ENCODE measurements at regions of chr10 and their contacts with region 1.

Region 1: DNA sequence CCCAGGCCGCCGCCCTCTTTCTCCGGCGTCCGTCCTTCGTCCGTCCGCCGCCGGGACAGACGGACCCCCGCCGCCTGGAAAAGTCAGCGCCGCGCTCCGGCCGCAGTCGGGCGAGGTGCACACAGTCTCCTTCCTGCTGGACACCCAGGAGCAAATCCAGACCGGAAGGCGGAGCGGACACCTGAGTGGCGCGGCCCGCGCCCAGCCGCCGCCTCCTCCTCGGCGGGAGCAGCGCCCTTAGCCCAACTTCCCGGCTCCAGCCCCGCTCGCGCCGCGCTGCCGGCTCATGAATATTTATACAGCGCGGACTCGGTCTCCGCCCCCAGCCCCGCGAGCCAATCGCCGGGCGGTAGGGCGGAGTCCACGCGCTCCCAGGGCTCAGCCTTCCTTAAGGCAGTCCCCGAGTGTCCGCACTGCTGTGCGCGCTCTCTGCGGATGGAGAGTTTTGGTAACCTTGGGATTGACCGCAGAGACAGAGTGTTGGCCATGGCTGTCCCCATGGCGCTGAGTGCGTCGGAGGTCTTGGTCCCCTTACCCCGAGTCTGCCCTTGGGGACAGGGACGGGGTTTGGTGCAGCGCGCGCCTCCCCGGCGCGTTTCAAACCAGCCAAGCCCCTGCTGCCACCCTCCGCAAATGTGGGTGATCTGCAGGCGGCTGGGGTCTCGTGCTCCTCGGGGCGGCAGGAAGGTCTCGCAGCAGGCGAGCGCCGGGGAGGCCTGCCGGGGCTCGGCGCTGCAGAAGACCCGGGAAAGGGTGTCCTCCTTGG is at the start of gene FZD8:
- DNase-seq: peak; percentile 92
- H3K4me3 Mint-ChIP-seq: peak within 1 kb of the TSS; percentile 85
- H3K27ac Mint-ChIP-seq: peak within 1 kb of the TSS; percentile 31
- H3K4me1 Mint-ChIP-seq: peaks cover 6% of the 10 kb centered on the region
- H3K27me3 Mint-ChIP-seq: no peaks in the 10 kb centered on the region
- CTCF ChIP-seq: no peak
- total RNA-seq, gene FZD8: 9.8 and 13.0 TPM in 2 replicates

Region 2: DNA sequence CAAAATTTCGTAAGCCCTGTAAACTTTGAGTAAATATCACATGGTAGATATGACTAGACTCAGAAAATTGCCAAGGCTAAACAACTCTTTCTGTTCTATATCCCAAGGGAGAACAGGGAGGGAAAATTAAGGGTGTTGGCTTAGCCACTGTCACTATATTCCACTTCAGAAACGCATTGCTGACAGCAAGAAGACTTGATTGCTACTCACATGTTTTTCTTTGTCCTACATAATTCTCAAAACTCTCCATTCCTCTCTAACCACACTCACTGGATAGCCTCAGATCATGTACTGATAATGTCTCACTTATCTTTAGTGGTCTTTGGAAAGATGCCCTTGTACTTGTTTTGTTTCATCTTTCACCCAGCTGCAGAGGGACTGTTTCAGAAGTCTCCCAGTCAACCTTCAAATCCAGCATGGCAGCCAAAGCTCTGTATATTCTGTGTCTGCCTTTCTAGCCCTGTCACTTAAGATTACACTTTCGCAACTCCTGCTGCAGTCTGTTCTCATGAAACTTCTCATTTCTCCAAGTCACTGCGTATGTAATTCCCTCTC is 582.3 kb after region 1 on chr10:
- CTCF ChIA-PET with region 1: no interaction called
- POLR2A ChIA-PET with region 1: no interaction called
- intact Hi-C with region 1: loop called (anchors 10 kb)
- DNase-seq: peak; percentile 39
- H3K4me3 Mint-ChIP-seq: no peak overlapping the region
- H3K27ac Mint-ChIP-seq: peak overlapping the region; percentile 25
- H3K4me1 Mint-ChIP-seq: peaks cover 15% of the 10 kb centered on the region
- H3K27me3 Mint-ChIP-seq: no peaks in the 10 kb centered on the region
- CTCF ChIP-seq: no peak

Region 3: DNA sequence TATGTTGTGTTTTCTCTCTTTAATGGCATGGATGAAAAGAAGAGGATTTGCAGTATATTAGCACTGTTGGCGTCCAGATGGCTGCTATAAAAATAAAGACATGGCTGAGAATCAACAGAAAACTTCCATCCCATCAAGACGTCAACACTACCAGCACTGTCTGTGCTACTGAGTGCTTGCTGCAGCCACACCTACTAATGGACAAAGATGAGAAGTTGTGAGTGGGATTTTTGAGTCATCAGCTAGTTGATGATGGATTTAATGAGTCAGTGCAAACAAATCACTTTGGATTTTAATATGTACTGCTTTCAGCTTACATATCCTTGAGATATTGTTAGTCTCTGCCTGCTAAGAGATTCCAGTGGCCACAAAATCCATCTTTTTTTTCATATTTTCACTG is 852.2 kb after region 1 on chr10:
- CTCF ChIA-PET with region 1: no interaction called
- POLR2A ChIA-PET with region 1: interaction called, 5 read pairs
- intact Hi-C with region 1: loop called (anchors 2 kb)
- DNase-seq: peak; percentile 67
- H3K4me3 Mint-ChIP-seq: no peak overlapping the region
- H3K27ac Mint-ChIP-seq: peak overlapping the region; percentile 87
- H3K4me1 Mint-ChIP-seq: peaks cover 44% of the 10 kb centered on the region
- H3K27me3 Mint-ChIP-seq: no peaks in the 10 kb centered on the region
- CTCF ChIP-seq: no peak

Region 4: GRCh38 chr10:36725581-36726520 is 1083.6 kb after region 1 on chr10:
- CTCF ChIA-PET with region 1: interaction called, 9 read pairs
- POLR2A ChIA-PET with region 1: interaction called, 5 read pairs
- intact Hi-C with region 1: loop called (anchors 1 kb)
- DNase-seq: peak; percentile 91
- H3K4me3 Mint-ChIP-seq: no peak overlapping the region
- H3K27ac Mint-ChIP-seq: no peak overlapping the region
- H3K4me1 Mint-ChIP-seq: peaks cover 8% of the 10 kb centered on the region
- H3K27me3 Mint-ChIP-seq: no peaks in the 10 kb centered on the region
- CTCF ChIP-seq: peak; percentile 63

Measured in MCF 10A (cell line).